MCF 10A (cell line): ENCODE measurements at regions of chr6 and their contacts with region 1.

Region 1: DNA sequence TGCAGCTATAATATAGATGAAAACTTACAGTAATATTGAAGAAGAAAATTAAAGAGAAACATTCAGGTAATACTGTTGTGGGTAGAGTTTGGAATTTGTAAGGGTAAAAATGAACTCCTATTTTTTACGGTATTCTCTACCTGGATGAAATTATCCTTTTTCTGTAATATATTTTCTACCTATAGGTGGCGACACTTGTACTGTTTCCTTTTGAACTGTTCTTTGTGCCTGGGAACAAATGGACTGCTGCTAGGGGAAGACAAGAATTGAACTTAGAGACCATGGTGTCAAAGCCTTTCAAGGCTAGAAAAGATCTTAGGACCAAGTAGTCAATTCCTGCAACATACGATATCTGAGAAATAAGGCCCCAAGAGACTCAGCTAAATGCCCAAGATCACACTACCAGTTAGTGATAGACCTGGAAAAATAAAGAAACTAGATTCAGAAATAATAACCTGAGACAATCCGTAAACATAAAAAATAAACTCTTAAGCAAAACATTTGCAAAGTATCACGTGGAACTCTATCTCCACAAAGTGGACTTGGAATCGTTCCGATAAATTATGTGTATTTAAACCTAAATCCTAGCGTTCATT is 383.8 kb downstream of the TFAP2A start:
- DNase-seq: peak; percentile 49
- H3K4me3 Mint-ChIP-seq: no peak overlapping the region
- H3K27ac Mint-ChIP-seq: no peak overlapping the region
- H3K4me1 Mint-ChIP-seq: peaks cover 7% of the 10 kb centered on the region
- H3K27me3 Mint-ChIP-seq: no peaks in the 10 kb centered on the region
- CTCF ChIP-seq: peak; percentile 54

Region 2: DNA sequence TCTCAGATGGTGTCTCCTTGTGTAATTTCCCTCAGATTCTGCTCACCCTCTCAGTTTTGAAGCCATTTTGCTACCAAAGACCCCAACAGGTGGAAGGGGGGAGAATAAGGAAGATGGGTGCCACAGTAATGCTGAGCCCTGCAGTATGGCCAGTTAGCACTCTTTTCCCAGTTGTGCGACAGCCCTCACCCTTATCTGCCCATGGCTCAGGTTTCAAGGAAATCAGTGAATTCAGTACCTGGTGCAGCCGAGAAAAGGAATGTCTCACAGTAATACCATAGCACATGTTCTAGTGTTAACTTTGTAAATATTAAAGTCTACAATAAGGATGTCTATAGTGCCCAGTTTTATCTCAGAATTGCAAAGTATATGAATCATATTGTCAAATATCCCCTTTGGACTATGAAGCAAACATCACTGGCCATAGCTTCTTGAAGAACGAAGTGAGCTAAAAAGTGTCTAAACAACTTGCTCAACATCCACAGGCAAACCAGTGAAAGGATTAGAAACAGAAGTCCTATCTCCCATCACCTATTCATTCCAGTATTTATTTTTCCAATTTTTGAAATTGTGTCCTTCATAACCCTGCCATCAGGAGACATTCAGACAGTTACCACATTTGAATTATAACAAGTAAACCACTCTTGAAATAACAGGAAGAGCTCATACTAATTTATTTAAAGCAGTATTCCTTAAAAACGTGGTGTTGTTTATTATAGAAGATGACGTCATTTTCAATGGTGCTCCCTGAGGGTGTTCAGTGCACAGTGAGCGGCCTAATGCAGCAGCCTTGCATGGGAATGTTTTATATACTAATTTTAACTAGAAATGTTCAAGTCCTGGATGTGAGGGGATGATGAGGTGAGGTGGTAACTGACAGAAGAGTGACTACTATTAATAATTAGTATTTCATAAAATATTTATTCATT is 17.6 kb after region 1 on chr6:
- CTCF ChIA-PET with region 1: interaction called, 13 read pairs
- POLR2A ChIA-PET with region 1: no interaction called
- intact Hi-C with region 1: no loop called
- DNase-seq: no peak
- H3K4me3 Mint-ChIP-seq: no peak overlapping the region
- H3K27ac Mint-ChIP-seq: no peak overlapping the region
- H3K4me1 Mint-ChIP-seq: no peaks in the 10 kb centered on the region
- H3K27me3 Mint-ChIP-seq: no peaks in the 10 kb centered on the region
- CTCF ChIP-seq: no peak

Region 3: GRCh38 chr6:10237284-10238043 is 206.4 kb after region 1 on chr6:
- CTCF ChIA-PET with region 1: no interaction called
- POLR2A ChIA-PET with region 1: no interaction called
- intact Hi-C with region 1: loop called (anchors 5 kb)
- DNase-seq: peak; percentile 95
- H3K4me3 Mint-ChIP-seq: no peak overlapping the region
- H3K27ac Mint-ChIP-seq: peak overlapping the region; percentile 86
- H3K4me1 Mint-ChIP-seq: peaks cover 14% of the 10 kb centered on the region
- H3K27me3 Mint-ChIP-seq: no peaks in the 10 kb centered on the region
- CTCF ChIP-seq: no peak